MCF 10A (cell line): ENCODE measurements at regions of chr10 and their contacts with region 1.

Region 1: DNA sequence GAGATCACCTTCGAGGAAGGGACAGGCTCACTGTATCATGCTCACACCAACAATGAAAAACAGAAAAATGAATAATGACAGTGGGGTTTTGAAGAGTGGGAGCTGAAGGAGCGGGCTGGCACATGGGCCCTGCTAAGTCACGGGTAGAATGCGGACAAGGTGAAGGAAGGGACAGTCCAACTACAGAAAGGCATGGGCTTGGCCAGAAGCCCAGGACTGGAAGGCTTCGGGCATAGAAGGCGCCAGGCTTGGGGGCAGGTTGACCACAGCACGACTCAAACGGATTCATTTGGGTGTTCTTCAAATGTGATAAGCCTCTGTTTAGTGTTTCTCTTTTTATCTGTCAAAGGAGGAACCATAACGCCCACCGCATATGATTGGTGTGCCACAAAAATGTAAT is 509.5 kb downstream of the CCSER2 start:
- DNase-seq: no peak
- H3K4me3 Mint-ChIP-seq: no peak overlapping the region
- H3K27ac Mint-ChIP-seq: no peak overlapping the region
- H3K4me1 Mint-ChIP-seq: no peaks in the 10 kb centered on the region
- H3K27me3 Mint-ChIP-seq: no peaks in the 10 kb centered on the region
- CTCF ChIP-seq: no peak

Region 2: GRCh38 chr10:84665883-84666463 is 171.9 kb before region 1 on chr10:
- CTCF ChIA-PET with region 1: no interaction called
- POLR2A ChIA-PET with region 1: no interaction called
- intact Hi-C with region 1: no loop called
- DNase-seq: peak; percentile 53
- H3K4me3 Mint-ChIP-seq: no peak overlapping the region
- H3K27ac Mint-ChIP-seq: no peak overlapping the region
- H3K4me1 Mint-ChIP-seq: no peaks in the 10 kb centered on the region
- H3K27me3 Mint-ChIP-seq: no peaks in the 10 kb centered on the region
- CTCF ChIP-seq: peak; percentile 30

Region 3: GRCh38 chr10:84743483-84743882 is 94.4 kb before region 1 on chr10:
- CTCF ChIA-PET with region 1: no interaction called
- POLR2A ChIA-PET with region 1: no interaction called
- intact Hi-C with region 1: no loop called
- DNase-seq: peak; percentile 26
- H3K4me3 Mint-ChIP-seq: no peak overlapping the region
- H3K27ac Mint-ChIP-seq: no peak overlapping the region
- H3K4me1 Mint-ChIP-seq: no peaks in the 10 kb centered on the region
- H3K27me3 Mint-ChIP-seq: no peaks in the 10 kb centered on the region
- CTCF ChIP-seq: peak; percentile 28

Region 4: DNA sequence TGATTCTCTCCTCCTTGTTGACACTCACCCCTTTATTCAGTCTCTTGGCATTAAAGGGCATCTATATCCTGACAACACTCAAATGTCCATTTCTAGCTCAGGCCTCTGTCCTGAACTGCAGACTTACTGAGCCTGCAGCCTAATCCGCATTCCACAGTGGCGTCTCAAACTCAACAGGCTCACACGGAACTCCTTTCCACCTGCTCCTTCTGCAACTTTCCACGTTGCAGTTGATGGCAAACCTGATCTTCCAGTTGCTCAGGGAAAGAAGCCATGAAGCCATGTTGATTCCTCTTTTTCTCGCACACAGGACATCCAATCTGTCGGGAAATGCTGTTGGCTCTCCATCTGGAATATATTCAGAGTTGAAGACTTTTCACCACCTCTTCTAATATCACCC is 12.9 kb after region 1 on chr10:
- CTCF ChIA-PET with region 1: interaction called, 4 read pairs
- POLR2A ChIA-PET with region 1: no interaction called
- intact Hi-C with region 1: loop called (anchors 1 kb)
- DNase-seq: no peak
- H3K4me3 Mint-ChIP-seq: no peak overlapping the region
- H3K27ac Mint-ChIP-seq: no peak overlapping the region
- H3K4me1 Mint-ChIP-seq: no peaks in the 10 kb centered on the region
- H3K27me3 Mint-ChIP-seq: no peaks in the 10 kb centered on the region
- CTCF ChIP-seq: no peak